Activated CD4-positive, alpha-beta memory T cell treated with anti-CD3 and anti-CD28 coated beads for 36 hours (primary cell): ENCODE measurements at regions of chr11 and their contacts with region 1.

Region 1: GRCh38 chr11:63945477-63946163 is 6.8 kb downstream of the NAA40 start:
- DNase-seq: peak; percentile 60
- H3K4me3 Mint-ChIP-seq: no peak overlapping the region
- H3K27ac Mint-ChIP-seq: no peak overlapping the region
- H3K4me1 Mint-ChIP-seq: peaks cover 5% of the 10 kb centered on the region
- H3K27me3 Mint-ChIP-seq: no peaks in the 10 kb centered on the region

Region 2: DNA sequence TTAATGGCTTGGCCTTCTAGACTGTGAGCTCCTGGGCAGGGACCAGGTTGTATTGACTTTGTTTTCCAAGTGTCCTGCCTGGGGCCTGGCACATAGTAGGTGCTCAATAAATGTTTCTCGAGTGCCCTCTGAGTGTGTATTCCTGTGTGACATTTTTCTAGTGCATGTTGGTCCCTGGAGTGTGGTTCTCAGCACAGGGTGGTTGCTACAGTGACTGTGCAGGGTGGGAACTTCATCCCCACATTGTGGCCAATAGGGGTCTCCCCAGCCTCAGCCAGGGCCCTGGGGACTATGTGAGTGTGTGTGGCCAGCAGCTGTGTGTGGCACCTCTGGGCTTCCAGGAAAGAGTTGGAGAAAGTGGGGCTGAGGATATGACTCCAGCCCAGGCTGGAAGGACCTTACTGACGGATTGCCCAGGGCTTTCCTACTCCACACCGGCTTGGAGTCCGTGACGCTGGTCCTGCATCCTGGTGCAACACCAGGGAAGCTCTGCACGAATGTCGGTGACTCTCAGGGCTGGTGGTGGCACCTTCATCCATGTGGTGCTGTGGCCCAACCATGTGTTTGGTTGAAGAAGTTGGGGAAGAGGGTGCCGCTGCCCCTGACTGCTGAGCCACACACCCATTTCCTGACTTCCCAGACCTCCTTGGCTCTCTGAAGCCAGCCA is 115.7 kb before region 1 on chr11:
- CTCF ChIA-PET with region 1: interaction called, 197 read pairs
- POLR2A ChIA-PET with region 1: no interaction called
- intact Hi-C with region 1: no loop called
- DNase-seq: peak; percentile 20
- H3K4me3 Mint-ChIP-seq: no peak overlapping the region
- H3K27ac Mint-ChIP-seq: no peak overlapping the region
- H3K4me1 Mint-ChIP-seq: no peaks in the 10 kb centered on the region
- H3K27me3 Mint-ChIP-seq: no peaks in the 10 kb centered on the region

Region 3: DNA sequence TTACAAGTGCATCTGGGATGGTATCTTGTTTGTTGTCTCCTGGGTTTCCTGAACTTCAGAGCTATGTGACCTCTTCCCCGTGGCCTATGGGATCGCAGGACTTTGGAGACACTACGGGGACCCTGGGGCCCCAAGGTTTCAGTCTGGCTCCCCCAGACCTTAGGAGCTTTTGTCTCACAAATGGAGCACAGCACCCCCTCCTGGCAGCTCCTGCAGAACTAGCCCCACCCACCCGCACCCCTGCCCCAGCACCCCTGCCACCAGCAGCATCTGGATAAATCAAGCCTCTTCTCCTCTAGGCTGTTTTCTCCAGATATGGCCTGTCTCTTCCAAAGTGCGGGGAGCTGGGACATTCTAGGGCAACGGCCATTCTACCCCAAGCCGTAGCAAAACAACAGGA is 39.0 kb before region 1 on chr11:
- CTCF ChIA-PET with region 1: interaction called, 16 read pairs
- POLR2A ChIA-PET with region 1: no interaction called
- intact Hi-C with region 1: no loop called
- DNase-seq: peak; percentile 63
- H3K4me3 Mint-ChIP-seq: no peak overlapping the region
- H3K27ac Mint-ChIP-seq: no peak overlapping the region
- H3K4me1 Mint-ChIP-seq: no peaks in the 10 kb centered on the region
- H3K27me3 Mint-ChIP-seq: no peaks in the 10 kb centered on the region

Region 4: DNA sequence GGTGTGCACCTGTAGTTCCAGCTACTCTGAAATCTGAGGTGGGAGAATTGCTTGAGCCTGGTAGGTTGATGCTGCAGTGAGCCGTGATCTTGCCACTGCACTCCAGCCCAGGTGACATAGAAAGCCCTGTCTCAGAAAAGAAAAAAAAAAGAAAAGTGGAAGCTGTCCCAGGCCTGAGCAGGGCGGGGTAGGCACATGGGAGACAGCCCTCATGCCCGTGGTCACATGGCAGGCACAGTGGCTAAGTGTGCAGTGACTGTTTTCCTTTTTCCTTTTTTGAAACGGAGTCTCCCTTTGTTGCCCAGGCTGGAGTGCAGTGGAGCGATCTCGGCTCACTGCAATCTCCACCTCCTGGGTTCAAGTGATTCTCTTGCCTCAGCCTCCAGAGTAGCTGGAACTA is 48.4 kb after region 1 on chr11:
- CTCF ChIA-PET with region 1: no interaction called
- POLR2A ChIA-PET with region 1: no interaction called
- intact Hi-C with region 1: no loop called
- DNase-seq: no peak
- H3K4me3 Mint-ChIP-seq: no peak overlapping the region
- H3K27ac Mint-ChIP-seq: no peak overlapping the region
- H3K4me1 Mint-ChIP-seq: peaks cover 4% of the 10 kb centered on the region
- H3K27me3 Mint-ChIP-seq: no peaks in the 10 kb centered on the region

Region 5: GRCh38 chr11:64810271-64810890 is 864.8 kb after region 1 on chr11 and contains the start of gene MEN1:
- CTCF ChIA-PET with region 1: no interaction called
- POLR2A ChIA-PET with region 1: no interaction called
- intact Hi-C with region 1: no loop called
- DNase-seq: peak; percentile 92
- H3K4me3 Mint-ChIP-seq: peak within 1 kb of the TSS; percentile 97
- H3K27ac Mint-ChIP-seq: peak within 1 kb of the TSS; percentile 74
- H3K4me1 Mint-ChIP-seq: peaks cover 20% of the 10 kb centered on the region
- H3K27me3 Mint-ChIP-seq: no peaks in the 10 kb centered on the region
- total RNA-seq, gene MEN1: 31.3 to 32.2 TPM